Ascending aorta (tissue), 2 donors: ENCODE measurements at regions of chr11 and their contacts with region 1.

Region 1: GRCh38 chr11:65569973-65570918 is at the start of gene ZNRD2:
- DNase-seq: peak; percentile 95 to 99
- H3K4me3 ChIP-seq: peak within 1 kb of the TSS; percentile 95 to 98
- H3K27ac ChIP-seq: peak within 1 kb of the TSS; percentile 90 to 99
- H3K4me1 ChIP-seq: peaks cover 30 to 56% of the 10 kb centered on the region in 2 donors
- H3K27me3 ChIP-seq: no peaks in the 10 kb centered on the region
- CTCF ChIP-seq: peak; percentile 37 to 46 (median 45)
- total RNA-seq, gene ZNRD2: 157 TPM

Region 2: DNA sequence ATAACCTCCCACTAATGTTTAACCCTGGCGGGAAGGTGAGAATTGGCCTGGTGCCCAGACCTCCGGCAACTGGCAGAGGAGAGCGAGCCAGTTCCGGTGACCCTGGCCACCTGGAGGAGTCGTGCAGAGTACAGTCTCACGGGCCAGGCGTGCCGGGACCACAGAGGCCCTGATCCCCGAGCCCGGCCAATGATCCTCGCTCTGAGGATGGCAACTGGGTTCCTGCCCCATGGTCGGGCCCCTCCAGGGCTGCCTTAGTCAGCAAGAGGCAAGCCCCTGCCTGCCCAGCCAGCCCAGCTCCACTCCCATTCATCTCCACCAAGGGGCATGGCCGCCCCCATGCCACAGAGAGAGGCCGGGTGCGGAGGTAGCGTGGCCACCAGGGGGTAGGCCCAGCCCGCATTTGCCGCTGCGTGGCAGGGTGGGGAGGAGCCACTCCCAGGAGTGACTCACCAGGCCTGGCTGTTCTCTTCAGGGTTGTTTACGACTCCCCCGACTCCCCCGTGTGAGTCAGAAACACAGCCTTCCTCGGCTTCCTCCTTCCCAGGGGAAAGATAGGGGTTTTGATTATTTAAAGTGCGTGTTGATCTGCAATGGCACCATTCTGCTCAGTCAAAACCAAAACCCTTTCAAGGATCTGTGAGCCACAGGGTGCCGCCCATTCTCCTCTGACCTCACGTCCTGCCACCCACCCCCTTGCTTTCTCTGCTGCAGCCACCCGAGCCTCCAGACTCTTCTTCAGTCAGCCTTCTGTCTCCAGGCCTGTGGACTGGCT is 188.0 kb before region 1 on chr11 and contains the start of gene SLC25A45:
- intact Hi-C with region 1: loop called (anchors 5 kb)
- DNase-seq: peak; percentile 91 to 98
- H3K4me3 ChIP-seq: peak within 1 kb of the TSS; percentile 31 to 63
- H3K27ac ChIP-seq: peak within 1 kb of the TSS; percentile 95 to 97
- H3K4me1 ChIP-seq: peaks cover 10 to 34% of the 10 kb centered on the region in 2 donors
- H3K27me3 ChIP-seq: no peaks in the 10 kb centered on the region
- CTCF ChIP-seq: peak; percentile 80 to 98 (median 88)
- total RNA-seq, gene SLC25A45: 11.4 TPM

Region 3: DNA sequence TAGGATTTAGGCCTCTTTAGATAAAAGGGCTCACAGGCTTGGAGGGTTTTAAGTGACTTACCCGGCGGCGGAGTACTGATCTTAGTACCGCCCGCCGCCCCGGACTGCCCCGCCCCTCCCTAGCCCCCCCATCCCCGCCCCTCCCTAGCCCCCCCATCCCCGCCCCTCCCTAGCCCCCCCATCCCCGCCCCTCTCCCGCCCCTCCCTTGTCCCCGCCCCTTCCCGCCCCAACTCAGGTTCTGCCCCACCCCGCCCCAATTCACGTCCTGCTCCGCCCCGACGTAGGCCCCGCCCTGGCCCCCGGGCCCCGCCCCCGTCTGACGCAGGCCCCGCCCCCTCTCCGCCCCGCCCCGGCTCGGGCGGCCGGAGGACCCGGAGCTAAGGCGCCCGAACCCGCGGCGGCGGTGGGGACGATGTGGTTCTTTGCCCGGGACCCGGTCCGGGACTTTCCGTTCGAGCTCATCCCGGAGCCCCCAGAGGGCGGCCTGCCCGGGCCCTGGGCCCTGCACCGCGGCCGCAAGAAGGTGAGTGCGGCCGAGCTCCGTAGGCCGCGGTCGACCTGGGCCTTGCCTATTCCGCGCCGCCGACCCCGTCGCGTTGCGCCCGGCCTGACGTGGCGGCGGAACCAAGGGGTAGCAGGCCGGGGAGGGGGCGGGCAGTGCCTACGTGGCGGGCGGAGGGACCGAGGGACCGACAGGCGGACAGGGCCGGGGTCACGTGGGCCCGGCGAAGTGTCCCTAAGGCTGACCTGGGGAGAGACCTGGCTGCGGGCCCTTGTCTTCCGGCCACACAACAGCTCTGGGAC is 45.3 kb before region 1 on chr11 and contains the start of gene SCYL1:
- intact Hi-C with region 1: loop called (anchors 2 kb)
- DNase-seq: peak in 1 of 2 donors; percentile 86
- H3K4me3 ChIP-seq: peak within 1 kb of the TSS; percentile 70 to 90
- H3K27ac ChIP-seq: peak within 1 kb of the TSS; percentile 83 to 95
- H3K4me1 ChIP-seq: peaks cover 16 to 18% of the 10 kb centered on the region in 2 donors
- H3K27me3 ChIP-seq: no peaks in the 10 kb centered on the region
- CTCF ChIP-seq: no peak
- total RNA-seq, gene SCYL1: 220 TPM

Region 4: DNA sequence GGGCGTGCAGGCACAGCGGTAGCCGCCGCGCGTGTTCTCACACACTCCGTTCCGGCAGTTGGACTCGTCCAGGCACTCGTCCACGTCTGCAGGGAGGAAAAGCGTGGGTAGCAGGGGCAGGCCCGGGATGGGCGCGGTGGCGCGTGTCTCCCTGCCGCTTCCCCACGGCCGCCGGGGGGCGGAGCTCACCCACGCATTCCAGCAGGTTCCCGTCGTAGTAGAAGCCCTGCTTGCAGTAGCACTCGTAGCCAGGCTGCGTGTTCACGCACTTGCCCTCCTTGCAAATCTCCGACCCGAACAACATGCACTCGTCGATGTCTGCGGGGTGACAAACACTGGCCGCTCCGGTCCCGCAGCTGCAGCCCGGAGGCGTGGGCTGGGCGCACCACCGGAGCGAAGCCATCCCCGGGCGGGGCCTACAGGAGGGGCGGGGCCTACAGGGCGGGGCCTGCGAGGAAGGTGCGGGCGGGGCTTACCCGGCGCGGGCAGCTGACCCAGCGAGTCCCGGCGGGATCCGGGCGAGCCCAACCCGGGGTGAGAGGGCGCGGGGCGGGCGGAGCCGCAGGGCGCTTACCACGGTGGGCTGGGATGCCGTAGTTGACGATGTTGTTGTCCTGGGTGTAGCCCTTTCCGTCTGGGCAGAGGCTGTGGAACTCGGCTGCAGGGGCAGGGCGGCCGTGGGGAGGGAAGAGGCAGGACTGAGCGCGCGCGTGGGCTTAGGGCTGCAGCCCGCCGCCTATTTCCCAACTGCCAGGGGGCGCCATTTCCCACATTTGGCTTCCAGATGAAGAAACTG is 29.8 kb before region 1 on chr11:
- intact Hi-C with region 1: loop called (anchors 1 kb)
- DNase-seq: peak; percentile 54 to 94
- H3K4me3 ChIP-seq: peak overlapping the region; percentile 58 to 68
- H3K27ac ChIP-seq: peak overlapping the region; percentile 80 to 90
- H3K4me1 ChIP-seq: peaks cover 16 to 22% of the 10 kb centered on the region in 2 donors
- H3K27me3 ChIP-seq: no peaks in the 10 kb centered on the region
- CTCF ChIP-seq: peak; percentile 85 to 98 (median 94)

Region 5: DNA sequence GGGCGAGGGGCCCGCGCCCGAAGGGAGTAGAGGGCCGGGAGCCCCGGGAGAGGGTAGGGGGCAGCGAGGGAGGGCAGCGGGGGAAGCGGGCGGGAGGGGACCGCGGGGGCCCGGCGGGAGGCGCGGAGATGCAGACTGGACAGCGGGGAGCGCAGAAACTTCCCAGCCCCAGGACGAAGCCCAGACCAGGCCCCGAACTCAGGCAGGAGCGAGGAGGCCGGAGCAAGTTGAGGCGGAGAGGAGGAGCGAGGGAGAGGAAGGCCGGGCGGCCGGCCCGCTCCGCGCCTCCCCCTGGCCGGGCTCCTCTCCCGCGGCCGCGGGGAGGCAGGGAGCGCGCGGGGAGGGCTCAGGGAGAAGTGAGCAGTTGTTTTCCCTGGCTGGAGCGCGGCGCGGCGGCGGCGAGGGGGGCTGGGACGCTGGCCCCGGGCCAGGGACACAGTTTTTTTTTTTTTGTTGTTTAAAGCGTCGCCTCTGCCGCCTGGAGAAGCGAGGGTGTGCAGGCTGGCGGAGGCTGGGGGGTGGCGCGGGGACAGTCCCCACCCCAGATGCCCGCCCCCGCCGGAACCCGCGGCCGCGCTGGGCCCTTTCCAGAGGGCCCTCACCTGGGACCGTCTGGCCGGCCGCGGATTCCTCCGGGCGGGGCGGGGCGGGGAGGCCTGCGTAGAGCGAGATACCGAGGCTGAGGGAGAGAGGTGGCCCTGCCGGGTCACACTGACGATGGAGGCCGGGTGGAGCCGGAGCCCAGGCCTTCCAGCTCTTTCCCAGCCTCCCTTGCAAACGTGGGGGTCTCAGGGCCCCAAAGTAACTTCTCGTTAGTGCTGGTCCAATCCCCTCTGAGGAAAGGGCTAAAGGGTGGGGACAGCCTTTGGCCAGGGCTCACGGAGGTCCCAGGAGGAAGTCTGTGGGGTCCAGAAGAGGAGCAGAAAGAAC is 12.0 kb before region 1 on chr11 and contains the start of gene LTBP3:
- intact Hi-C with region 1: loop called (anchors 1 kb)
- DNase-seq: peak in 1 of 2 donors; percentile 93
- H3K4me3 ChIP-seq: peak within 1 kb of the TSS; percentile 79 to 82
- H3K27ac ChIP-seq: peak within 1 kb of the TSS; percentile 97 to 99
- H3K4me1 ChIP-seq: peaks cover 26 to 69% of the 10 kb centered on the region in 2 donors
- H3K27me3 ChIP-seq: no peaks in the 10 kb centered on the region
- CTCF ChIP-seq: no peak
- total RNA-seq, gene LTBP3: 702 TPM

Region 6: DNA sequence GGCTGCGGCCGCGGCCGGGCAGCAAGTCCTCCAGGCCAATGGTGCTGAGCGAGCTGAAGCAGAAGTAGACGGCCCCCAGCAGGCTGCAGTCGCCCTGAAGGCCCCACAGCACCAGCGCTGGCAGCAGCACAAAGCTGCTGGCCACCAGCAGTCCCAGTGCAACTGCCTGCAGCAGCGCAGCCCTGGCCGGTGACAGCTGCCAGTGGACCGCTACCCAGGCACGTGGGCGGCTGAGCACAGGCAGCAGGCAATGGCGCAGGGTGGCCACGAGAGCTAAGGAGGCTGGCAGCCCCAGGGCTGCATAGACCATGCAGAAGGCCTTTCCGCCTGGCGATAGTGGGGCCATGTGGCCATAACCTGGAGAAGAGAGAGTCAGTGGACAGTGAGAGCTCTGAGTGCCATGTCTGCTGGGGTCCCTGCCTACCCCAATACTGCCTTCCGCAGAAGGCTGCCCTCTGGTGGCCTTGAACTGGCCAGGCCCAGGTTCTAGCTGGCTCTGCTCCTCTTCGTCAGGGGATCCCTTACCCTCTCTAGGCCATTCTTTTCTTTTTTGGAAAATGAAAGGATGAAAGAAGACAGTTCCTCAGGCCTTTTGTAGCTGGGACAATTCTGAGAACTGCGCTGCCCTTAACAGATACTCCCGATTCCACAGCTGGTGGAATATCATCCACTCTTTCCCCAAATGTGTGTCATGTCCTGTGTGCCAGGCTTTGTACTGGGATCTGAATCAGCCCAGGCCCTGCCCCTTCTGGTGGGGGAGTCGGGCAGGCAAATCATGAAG is 23.5 kb after region 1 on chr11:
- intact Hi-C with region 1: loop called (anchors 1 kb)
- DNase-seq: no peak
- H3K4me3 ChIP-seq: no peak overlapping the region
- H3K27ac ChIP-seq: no peak overlapping the region
- H3K4me1 ChIP-seq: peaks cover 0 to under 1% of the 10 kb centered on the region in 2 donors
- H3K27me3 ChIP-seq: no peaks in the 10 kb centered on the region
- CTCF ChIP-seq: peak; percentile 51 to 74 (median 71)

Region 7: DNA sequence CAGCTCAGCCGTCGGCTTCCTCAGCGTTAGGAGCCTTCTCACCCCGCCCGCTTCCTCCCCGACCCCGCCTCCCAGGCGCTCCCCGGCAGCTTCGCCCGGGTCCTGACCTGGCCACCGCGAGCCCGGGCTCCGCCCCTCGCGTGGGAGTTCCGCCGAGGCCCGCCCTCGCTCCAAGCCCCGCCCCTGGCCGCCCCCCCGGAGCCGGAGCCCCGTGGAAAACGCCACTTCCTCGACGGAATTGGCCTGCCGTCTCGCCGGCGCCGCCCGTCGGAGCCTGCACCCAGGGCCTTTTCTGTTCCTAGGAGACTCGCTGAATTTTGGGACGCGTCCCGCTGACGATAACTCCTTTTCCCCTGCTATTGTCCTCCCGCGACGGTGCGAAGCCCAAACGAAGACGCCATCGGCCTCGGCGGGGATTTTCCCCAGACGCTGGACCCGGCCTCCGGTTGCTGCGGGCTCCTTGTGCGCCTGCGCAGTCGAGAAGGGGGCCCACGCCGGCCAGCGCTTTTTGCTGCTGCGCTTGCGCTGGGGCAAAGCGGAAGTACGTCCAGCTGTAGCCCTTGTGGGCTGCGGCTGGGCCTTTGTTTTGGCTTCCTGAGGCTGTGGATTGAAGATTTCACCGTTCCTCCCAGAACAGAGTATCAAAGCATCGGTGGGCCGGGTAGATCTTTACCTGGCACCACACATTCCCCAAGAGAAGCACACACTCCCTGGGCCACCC is 82.4 kb after region 1 on chr11:
- intact Hi-C with region 1: loop called (anchors 5 kb)
- DNase-seq: peak; percentile 71 to 96
- H3K4me3 ChIP-seq: peak overlapping the region; percentile 51 to 62
- H3K27ac ChIP-seq: peak overlapping the region; percentile 89 to 93
- H3K4me1 ChIP-seq: peaks cover 12 to 17% of the 10 kb centered on the region in 2 donors
- H3K27me3 ChIP-seq: no peaks in the 10 kb centered on the region
- CTCF ChIP-seq: no peak

Region 8: GRCh38 chr11:65685981-65686380 is 115.7 kb after region 1 on chr11:
- intact Hi-C with region 1: no loop called
- DNase-seq: no peak
- H3K4me3 ChIP-seq: no peak overlapping the region
- H3K27ac ChIP-seq: no peak overlapping the region
- H3K4me1 ChIP-seq: no peaks in the 10 kb centered on the region
- H3K27me3 ChIP-seq: no peaks in the 10 kb centered on the region
- CTCF ChIP-seq: no peak